HEK293 (cell line): ENCODE measurements at regions of chr7 and their contacts with region 1.

Region 1: DNA sequence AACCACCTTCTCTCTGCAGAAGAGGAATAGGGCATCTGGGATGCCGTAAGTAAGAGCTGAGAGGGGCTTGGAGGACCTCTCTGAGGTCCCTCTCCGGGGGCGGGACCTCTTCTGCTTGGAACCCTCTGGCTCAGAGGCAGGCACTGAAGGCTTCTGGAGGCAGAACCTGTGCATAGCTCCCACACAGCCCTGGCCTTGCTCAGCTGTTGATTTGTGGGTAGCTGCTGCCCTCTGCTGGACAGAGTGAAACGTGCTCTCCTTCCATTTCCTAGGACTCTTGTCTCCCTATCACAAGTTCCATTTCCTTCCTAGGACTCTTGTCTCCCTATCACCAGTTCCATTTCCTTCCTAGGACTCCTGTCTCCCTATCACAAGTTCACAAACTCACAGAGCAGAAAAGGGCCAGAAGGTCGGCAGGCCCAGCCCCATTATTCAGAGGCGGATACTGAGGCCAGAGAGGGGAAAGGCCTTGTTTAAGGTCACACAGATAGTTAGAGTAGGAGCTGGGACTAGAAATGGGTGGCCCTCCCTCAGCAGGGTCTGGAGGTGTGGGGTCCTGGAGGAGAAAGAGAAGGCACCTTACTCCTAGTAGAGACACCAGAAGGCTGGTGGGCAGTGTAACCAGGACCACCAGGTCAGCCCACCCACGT is 30.3 kb upstream of the GARS1 start:
- H3K4me3 ChIP-seq: no peak overlapping the region
- H3K27ac ChIP-seq: no peak overlapping the region
- H3K4me1 ChIP-seq: peaks cover 4% of the 10 kb centered on the region
- CTCF ChIP-seq: peak; percentile 76

Region 2: DNA sequence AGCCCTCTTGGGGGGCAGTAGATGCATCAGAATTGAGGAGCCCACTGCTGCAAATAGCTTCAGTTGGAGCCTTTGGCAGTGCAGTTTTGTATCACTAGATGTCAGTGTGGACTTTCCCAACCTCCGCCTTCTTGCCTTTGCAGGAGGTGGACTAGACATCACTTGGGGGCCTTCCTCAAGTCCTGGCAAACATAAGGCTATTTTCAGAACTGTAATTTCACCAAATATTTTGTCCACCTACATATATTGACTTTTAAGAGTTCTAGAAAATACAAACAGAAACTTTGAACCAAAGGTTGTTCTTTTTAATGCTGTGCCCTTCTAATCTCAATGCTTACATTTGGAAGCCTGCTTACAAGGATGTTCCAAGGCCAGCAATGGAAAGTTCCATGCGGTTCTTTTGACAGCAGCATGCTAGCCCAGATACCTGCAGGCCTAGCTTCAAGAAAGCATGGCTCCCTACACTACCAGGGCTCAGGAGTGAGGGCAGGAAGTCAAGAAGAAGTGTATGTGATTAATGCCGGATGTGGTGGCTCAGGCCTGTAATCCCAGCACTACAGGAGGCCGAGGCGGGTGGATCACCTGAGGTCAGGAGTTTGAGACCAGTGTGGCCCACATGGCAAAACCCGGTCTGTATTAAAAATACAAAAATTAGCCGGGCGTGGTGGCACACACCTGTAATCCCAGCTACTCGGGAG is 288.0 kb before region 1 on chr7:
- CTCF ChIA-PET with region 1: interaction called, 86 read pairs
- POLR2A ChIA-PET with region 1: no interaction called
- H3K4me3 ChIP-seq: no peak overlapping the region
- H3K27ac ChIP-seq: no peak overlapping the region
- H3K4me1 ChIP-seq: no peaks in the 10 kb centered on the region
- CTCF ChIP-seq: peak; percentile 60

Region 3: GRCh38 chr7:30504347-30505173 is 59.8 kb before region 1 on chr7 and contains the start of gene GGCT:
- CTCF ChIA-PET with region 1: interaction called, 13 read pairs
- POLR2A ChIA-PET with region 1: interaction called, 3 read pairs
- H3K4me3 ChIP-seq: peak within 1 kb of the TSS; percentile 84
- H3K27ac ChIP-seq: peak within 1 kb of the TSS; percentile 68
- H3K4me1 ChIP-seq: 0 out of 2 replicates have a peak, but pooled peaks cover 5% of the 10 kb centered on the region
- CTCF ChIP-seq: no peak

Region 4: GRCh38 chr7:30528779-30529178 is 35.6 kb before region 1 on chr7:
- CTCF ChIA-PET with region 1: no interaction called
- POLR2A ChIA-PET with region 1: no interaction called
- H3K4me3 ChIP-seq: no peak overlapping the region
- H3K27ac ChIP-seq: no peak overlapping the region
- H3K4me1 ChIP-seq: no peaks in the 10 kb centered on the region
- CTCF ChIP-seq: no peak

Region 5: DNA sequence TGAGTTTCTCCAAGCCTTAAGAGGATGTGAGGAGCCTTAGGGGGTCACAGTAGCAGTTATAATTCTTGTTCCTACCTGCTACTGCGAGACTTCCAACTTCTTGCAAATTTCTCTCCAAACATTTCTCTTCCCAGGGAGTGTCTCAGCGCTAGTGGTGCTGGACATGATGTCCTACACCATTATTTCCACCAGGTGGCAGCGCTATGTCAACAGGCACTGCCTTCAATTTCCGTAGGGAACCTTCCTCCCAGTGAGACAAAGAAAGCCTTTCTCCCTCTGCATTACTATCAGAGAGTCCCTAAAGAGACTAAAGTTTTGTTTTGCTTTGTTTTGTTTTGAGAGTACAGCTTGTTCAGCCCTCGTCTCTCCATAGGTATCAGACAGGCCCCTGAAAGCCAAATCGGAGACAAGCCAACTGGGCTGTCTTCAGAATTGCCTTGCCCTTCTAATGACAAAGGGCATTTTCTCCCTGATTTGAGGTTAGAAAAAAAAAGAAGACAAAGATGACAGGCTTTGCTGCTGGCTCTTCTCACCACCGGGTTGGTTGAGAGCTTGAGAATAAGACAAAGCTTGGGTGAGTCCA is 15.5 kb before region 1 on chr7:
- CTCF ChIA-PET with region 1: interaction called, 167 read pairs
- POLR2A ChIA-PET with region 1: no interaction called
- H3K4me3 ChIP-seq: no peak overlapping the region
- H3K27ac ChIP-seq: no peak overlapping the region
- H3K4me1 ChIP-seq: peaks cover 8% of the 10 kb centered on the region; the same call in 1 of the 2 replicates
- CTCF ChIP-seq: peak; percentile 31; the same call in 1 of the 2 replicates

Region 6: GRCh38 chr7:30708976-30709375 is 144.6 kb after region 1 on chr7:
- CTCF ChIA-PET with region 1: no interaction called
- POLR2A ChIA-PET with region 1: no interaction called
- H3K4me3 ChIP-seq: no peak overlapping the region
- H3K27ac ChIP-seq: no peak overlapping the region
- H3K4me1 ChIP-seq: no peaks in the 10 kb centered on the region
- CTCF ChIP-seq: no peak